HCT116 (cell line): ENCODE measurements at regions of chr4 and their contacts with region 1.

Region 1: GRCh38 chr4:118865091-118865708 is 23.5 kb upstream of the SYNPO2 start:
- DNase-seq: peak; percentile 64
- ATAC-seq: peak; percentile 100
- H3K4me3 ChIP-seq: peak overlapping the region in 1 of 2 experiments; percentile 22; a peak in 1 of 4 replicates
- H3K27ac ChIP-seq: no peak overlapping the region
- H3K4me1 ChIP-seq: peaks cover 0 to 9% of the 10 kb centered on the region in 2 experiments; a peak in 1 of 4 replicates
- H3K27me3 ChIP-seq: no peaks in the 10 kb centered on the region
- CTCF ChIP-seq: peak; percentile 47 to 84 (median 77); a peak in 5 of 6 replicates
- POLR2A ChIP-seq: no peak
- RAD21 ChIP-seq: peak; percentile 68

Region 2: DNA sequence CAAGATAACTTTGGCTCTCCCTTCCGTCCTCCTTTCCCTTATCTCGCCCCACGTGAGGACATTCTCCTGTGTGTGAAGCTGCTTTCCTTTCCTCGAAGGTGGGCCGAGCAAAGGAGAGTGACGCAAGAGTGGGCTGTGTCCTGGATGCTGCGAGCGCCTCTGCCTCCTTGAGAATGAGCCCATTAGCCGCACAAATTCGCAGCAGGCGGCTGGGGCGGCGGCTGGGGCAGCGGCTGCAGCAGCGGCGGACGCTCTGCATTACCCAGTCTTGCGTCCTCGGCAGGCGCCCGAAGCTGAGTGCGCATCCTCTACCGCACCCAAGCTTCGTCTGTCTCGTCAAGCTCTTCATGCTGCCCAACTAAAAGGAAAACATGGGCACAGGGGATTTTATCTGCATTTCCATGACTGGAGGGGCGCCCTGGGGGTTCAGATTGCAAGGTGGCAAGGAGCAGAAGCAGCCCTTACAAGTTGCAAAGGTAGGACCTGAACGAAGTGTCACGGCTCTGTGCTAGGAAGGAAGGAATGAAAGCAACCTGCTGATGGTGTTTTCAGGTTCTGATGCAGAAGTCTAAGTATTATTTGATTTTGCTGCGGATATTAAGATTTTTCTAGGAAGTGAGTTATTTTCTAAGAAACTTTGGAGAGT is 23.6 kb after region 1 on chr4 and contains the start of gene SYNPO2:
- CTCF ChIA-PET with region 1: interaction called, 14 read pairs
- POLR2A ChIA-PET with region 1: no interaction called
- RAD21 ChIA-PET with region 1: no interaction called
- intact Hi-C with region 1: no loop called
- DNase-seq: peak; percentile 57
- ATAC-seq: peak; percentile 94
- H3K4me3 ChIP-seq: peak within 1 kb of the TSS; percentile 52 to 59
- H3K27ac ChIP-seq: no peak within 1 kb of the TSS
- H3K4me1 ChIP-seq: peaks cover 2 to 22% of the 10 kb centered on the region in 2 experiments; a peak in 3 of 4 replicates
- H3K27me3 ChIP-seq: no peaks in the 10 kb centered on the region
- CTCF ChIP-seq: no peak
- POLR2A ChIP-seq: peak; percentile 30
- RAD21 ChIP-seq: peak; percentile 26; the same call in 1 of the 2 replicates
- total RNA-seq, gene SYNPO2: 0.93 TPM

Region 3: DNA sequence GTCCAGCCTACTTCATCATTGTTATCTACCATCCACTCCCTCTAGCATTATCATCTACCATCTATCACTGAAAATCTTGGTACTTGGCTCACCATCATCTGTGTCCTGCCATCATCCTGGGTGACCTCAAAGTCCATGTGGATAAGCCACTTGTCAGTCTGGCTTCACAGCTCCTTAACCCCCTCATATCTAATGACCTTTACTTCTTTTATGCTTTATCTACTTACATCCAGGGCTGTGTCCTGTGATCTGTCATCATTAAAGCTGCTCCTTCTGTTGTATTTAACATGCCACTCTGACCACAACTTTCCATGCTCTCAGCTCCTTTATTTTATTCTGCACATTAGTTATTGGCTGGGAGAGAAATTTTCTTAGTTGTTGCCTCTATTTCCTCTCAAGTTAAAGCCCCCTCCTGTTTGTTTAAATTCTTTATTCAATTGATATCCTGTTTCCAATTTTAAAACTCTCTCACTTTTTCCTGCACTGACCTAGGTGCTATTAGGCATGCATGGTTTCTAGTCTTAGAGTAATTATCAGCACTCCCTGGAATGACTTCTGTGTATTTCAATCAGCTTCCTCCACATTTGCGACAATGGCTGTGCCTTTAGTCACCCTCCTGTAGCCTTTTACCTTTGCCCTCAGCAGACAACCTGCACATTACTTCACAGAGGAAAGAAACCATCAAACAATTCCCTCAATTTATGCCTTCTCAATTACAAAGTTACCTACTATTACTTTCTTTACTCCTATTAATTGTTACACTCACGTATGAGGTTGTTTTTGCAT is 464.8 kb after region 1 on chr4:
- CTCF ChIA-PET with region 1: no interaction called
- POLR2A ChIA-PET with region 1: no interaction called
- RAD21 ChIA-PET with region 1: no interaction called
- intact Hi-C with region 1: no loop called
- DNase-seq: no peak
- ATAC-seq: no peak
- H3K4me3 ChIP-seq: no peak overlapping the region
- H3K27ac ChIP-seq: no peak overlapping the region
- H3K4me1 ChIP-seq: no peaks in the 10 kb centered on the region
- H3K27me3 ChIP-seq: no peaks in the 10 kb centered on the region
- CTCF ChIP-seq: no peak
- POLR2A ChIP-seq: no peak
- RAD21 ChIP-seq: no peak